IMR-90 (cell line): ENCODE measurements at regions of chr3 and their contacts with region 1.

Region 1: DNA sequence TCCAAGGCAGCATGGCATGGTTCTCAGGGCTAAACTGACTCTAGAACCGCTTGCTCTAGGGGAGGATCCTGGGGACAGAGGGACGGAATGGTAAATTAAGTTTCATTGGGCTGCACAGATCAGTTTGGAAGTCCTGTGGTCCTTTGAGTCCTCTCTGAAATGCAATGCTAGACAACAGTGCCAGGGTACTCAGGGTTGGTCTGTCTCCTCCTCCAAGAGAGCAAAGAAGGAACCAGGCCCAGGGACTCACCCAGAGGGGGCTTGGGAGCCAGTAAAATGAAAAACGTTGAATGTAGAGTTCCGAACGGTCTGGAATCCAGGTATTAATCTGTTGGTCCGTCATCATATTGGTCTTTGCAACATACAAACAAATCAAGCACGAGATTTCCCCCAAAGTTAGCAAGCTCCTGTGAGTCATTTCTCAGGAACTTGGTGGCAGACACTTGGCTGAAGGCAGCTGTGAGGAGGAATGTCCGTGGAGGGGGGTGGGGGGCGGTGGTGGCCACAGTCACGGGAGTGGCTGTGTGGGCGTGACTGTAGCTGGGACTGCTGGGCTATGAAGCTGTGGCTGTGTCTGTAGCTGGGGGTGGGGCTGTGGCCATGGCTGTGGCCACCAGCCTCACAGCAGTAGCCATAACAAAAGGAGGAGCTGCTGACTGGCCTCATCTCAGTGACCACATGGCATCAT is 361.0 kb downstream of the SHQ1 start:
- DNase-seq: peak; percentile 85
- ATAC-seq: peak; percentile 84
- H3K4me3 ChIP-seq: no peak overlapping the region
- H3K27ac ChIP-seq: peak overlapping the region; percentile 48; the same call in 1 of the 2 replicates
- H3K4me1 ChIP-seq: peaks cover 25% of the 10 kb centered on the region
- H3K27me3 ChIP-seq: no peaks in the 10 kb centered on the region
- CTCF ChIP-seq: no peak
- POLR2A ChIP-seq: no peak
- RAD21 ChIP-seq: no peak

Region 2: GRCh38 chr3:72549761-72550581 is 62.7 kb after region 1 on chr3:
- CTCF ChIA-PET with region 1: no interaction called
- POLR2A ChIA-PET with region 1: no interaction called
- dilution Hi-C with region 1: no loop called
- in situ Hi-C with region 1: no loop called
- intact Hi-C with region 1: no loop called
- DNase-seq: no peak
- ATAC-seq: peak; percentile 53
- H3K4me3 ChIP-seq: peak overlapping the region; percentile 16; the same call in 1 of the 2 replicates
- H3K27ac ChIP-seq: no peak overlapping the region
- H3K4me1 ChIP-seq: no peaks in the 10 kb centered on the region
- H3K27me3 ChIP-seq: peaks cover 5% of the 10 kb centered on the region
- CTCF ChIP-seq: no peak
- POLR2A ChIP-seq: no peak
- RAD21 ChIP-seq: no peak

Region 3: GRCh38 chr3:72591522-72592421 is 104.5 kb after region 1 on chr3:
- CTCF ChIA-PET with region 1: no interaction called
- POLR2A ChIA-PET with region 1: no interaction called
- dilution Hi-C with region 1: no loop called
- in situ Hi-C with region 1: no loop called
- intact Hi-C with region 1: loop called (anchors 5 kb)
- DNase-seq: peak; percentile 69
- ATAC-seq: peak; percentile 77
- H3K4me3 ChIP-seq: no peak overlapping the region
- H3K27ac ChIP-seq: no peak overlapping the region
- H3K4me1 ChIP-seq: peaks cover 3% of the 10 kb centered on the region
- H3K27me3 ChIP-seq: no peaks in the 10 kb centered on the region
- CTCF ChIP-seq: no peak
- POLR2A ChIP-seq: no peak
- RAD21 ChIP-seq: no peak; the same call in 1 of the 2 replicates

Region 4: GRCh38 chr3:74410276-74410941 is 1923.2 kb after region 1 on chr3:
- CTCF ChIA-PET with region 1: no interaction called
- POLR2A ChIA-PET with region 1: no interaction called
- dilution Hi-C with region 1: no loop called
- in situ Hi-C with region 1: no loop called
- intact Hi-C with region 1: no loop called
- DNase-seq: no peak
- ATAC-seq: no peak
- H3K4me3 ChIP-seq: no peak overlapping the region
- H3K27ac ChIP-seq: no peak overlapping the region
- H3K4me1 ChIP-seq: no peaks in the 10 kb centered on the region
- H3K27me3 ChIP-seq: no peaks in the 10 kb centered on the region
- CTCF ChIP-seq: no peak
- POLR2A ChIP-seq: no peak
- RAD21 ChIP-seq: no peak